ENCODE measurements at regions of chr3 and their contacts with region 1.

Region 1: GRCh38 chr3:9786825-9787669 is 5.2 kb downstream of the TADA3 start:
- DNase-seq: no peak
- H3K4me3 ChIP-seq: no peak overlapping the region
- H3K27ac ChIP-seq: no peak overlapping the region
- H3K4me1 ChIP-seq: peaks cover 0 to 4% of the 10 kb centered on the region in 2 donors
- H3K27me3 ChIP-seq: no peaks in the 10 kb centered on the region
- CTCF ChIP-seq: no peak
- POLR2A ChIP-seq: no peak

Region 2: GRCh38 chr3:11544412-11545181 is 1757.5 kb after region 1 on chr3:
- intact Hi-C with region 1: loop called (anchors 5 kb)
- DNase-seq: peak in 1 of 2 donors; percentile 51
- H3K4me3 ChIP-seq: no peak overlapping the region
- H3K27ac ChIP-seq: peak overlapping the region; percentile 60 to 84
- H3K4me1 ChIP-seq: peaks cover 0 to 7% of the 10 kb centered on the region in 2 donors
- H3K27me3 ChIP-seq: no peaks in the 10 kb centered on the region
- CTCF ChIP-seq: no peak
- POLR2A ChIP-seq: no peak

Measured in breast epithelium (tissue), 4 donors.